Esophagus muscularis mucosa (tissue), 4 donors: ENCODE measurements at regions of chr10 and their contacts with region 1.

Region 1: DNA sequence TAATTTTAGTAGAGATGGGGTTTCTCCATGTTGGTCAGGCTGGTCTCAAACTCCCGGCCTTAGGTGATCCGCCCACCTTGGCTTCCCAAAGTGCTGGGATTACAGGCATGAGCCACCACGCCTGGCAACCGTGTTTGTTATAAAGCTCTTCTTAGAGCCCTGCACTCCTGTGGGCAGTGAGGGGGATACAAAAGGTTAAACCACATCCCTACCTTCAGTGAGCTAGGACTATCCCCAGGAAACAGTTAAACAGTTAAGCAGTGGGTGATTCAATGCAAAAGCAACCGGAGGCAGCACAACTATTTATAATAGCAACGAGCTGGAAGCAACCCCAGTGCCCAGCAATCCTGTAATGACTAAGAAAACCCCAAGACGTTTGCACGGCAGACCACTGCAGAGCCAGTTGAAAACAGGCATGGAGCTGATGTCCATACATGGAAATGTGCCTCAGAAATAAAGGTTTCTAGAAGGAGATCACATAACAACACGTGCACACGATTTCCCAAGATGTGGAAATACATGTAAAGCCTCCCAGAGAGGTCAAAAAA is 107.2 kb upstream of the LYZL2 start:
- DNase-seq: no peak
- H3K4me3 ChIP-seq: no peak overlapping the region
- H3K27ac ChIP-seq: peak overlapping the region in 1 of 4 donors; percentile 33
- H3K4me1 ChIP-seq: peaks cover 7 to 12% (median 10%) of the 10 kb centered on the region in 4 donors
- H3K27me3 ChIP-seq: no peaks in the 10 kb centered on the region
- CTCF ChIP-seq: no peak
- EP300 ChIP-seq: no peak
- POLR2A ChIP-seq: no peak

Region 2: GRCh38 chr10:30848396-30849032 is 111.8 kb after region 1 on chr10:
- intact Hi-C with region 1: no loop called
- DNase-seq: no peak
- H3K4me3 ChIP-seq: no peak overlapping the region
- H3K27ac ChIP-seq: no peak overlapping the region
- H3K4me1 ChIP-seq: no peaks in the 10 kb centered on the region
- H3K27me3 ChIP-seq: no peaks in the 10 kb centered on the region
- CTCF ChIP-seq: no peak
- EP300 ChIP-seq: no peak
- POLR2A ChIP-seq: no peak

Region 3: GRCh38 chr10:31490858-31491504 is 754.2 kb after region 1 on chr10:
- intact Hi-C with region 1: loop called (anchors 10 kb)
- DNase-seq: no peak
- H3K4me3 ChIP-seq: no peak overlapping the region
- H3K27ac ChIP-seq: no peak overlapping the region
- H3K4me1 ChIP-seq: peaks cover 0 to 8% (median 0%) of the 10 kb centered on the region in 4 donors
- H3K27me3 ChIP-seq: no peaks in the 10 kb centered on the region
- CTCF ChIP-seq: peak; percentile 49 to 65 (median 64)
- EP300 ChIP-seq: no peak
- POLR2A ChIP-seq: no peak